Activated T-helper 1 cell treated with anti-CD3 and anti-CD28 coated beads, Interleukin-12 subunit alpha, Interleukin-12 subunit beta, Interleukin-2, Interleukin-4 antibody, amounts not matched to agents 30 ng/mL and 10 ng/mL and 1 ng/mL, durations not matched to agents 14 hours and 24 hours and 36 hours (primary cell): ENCODE measurements at regions of chr9 and their contacts with region 1.

Region 1: GRCh38 chr9:95726756-95727155 is 148.7 kb upstream of the ERCC6L2 start:
- DNase-seq: no peak
- H3K4me3 Mint-ChIP-seq: no peak overlapping the region
- H3K27ac Mint-ChIP-seq: no peak overlapping the region
- H3K4me1 Mint-ChIP-seq: peaks cover 41% of the 10 kb centered on the region
- H3K27me3 Mint-ChIP-seq: peaks cover 14% of the 10 kb centered on the region

Region 2: GRCh38 chr9:95167998-95168397 is 558.8 kb before region 1 on chr9:
- intact Hi-C with region 1: loop called (anchors 1 kb)
- DNase-seq: peak; percentile 47
- H3K4me3 Mint-ChIP-seq: peak overlapping the region; percentile 3
- H3K27ac Mint-ChIP-seq: peak overlapping the region; percentile 61
- H3K4me1 Mint-ChIP-seq: peaks cover 48% of the 10 kb centered on the region
- H3K27me3 Mint-ChIP-seq: no peaks in the 10 kb centered on the region

Region 3: DNA sequence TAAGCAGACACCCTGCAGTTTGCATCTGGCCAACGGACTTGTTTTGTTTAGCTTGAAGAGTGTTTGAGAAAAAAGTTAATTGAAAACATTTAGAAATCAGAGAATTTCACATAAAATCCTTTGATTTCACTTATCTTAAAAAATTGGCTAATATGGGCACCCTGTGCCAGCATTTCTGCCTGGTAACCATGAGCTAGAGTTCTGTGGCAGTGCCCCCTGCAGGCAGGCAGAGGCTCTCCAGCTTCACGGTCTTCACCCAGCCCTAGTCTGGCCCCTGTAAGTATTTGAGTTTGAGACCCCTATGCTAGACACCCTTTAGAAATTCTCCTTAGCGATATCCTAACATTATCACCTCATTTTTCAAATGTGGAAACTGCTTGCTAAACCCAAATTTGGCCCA is 390.5 kb before region 1 on chr9:
- intact Hi-C with region 1: no loop called
- DNase-seq: no peak
- H3K4me3 Mint-ChIP-seq: no peak overlapping the region
- H3K27ac Mint-ChIP-seq: no peak overlapping the region
- H3K4me1 Mint-ChIP-seq: no peaks in the 10 kb centered on the region
- H3K27me3 Mint-ChIP-seq: peaks cover 6% of the 10 kb centered on the region

Region 4: DNA sequence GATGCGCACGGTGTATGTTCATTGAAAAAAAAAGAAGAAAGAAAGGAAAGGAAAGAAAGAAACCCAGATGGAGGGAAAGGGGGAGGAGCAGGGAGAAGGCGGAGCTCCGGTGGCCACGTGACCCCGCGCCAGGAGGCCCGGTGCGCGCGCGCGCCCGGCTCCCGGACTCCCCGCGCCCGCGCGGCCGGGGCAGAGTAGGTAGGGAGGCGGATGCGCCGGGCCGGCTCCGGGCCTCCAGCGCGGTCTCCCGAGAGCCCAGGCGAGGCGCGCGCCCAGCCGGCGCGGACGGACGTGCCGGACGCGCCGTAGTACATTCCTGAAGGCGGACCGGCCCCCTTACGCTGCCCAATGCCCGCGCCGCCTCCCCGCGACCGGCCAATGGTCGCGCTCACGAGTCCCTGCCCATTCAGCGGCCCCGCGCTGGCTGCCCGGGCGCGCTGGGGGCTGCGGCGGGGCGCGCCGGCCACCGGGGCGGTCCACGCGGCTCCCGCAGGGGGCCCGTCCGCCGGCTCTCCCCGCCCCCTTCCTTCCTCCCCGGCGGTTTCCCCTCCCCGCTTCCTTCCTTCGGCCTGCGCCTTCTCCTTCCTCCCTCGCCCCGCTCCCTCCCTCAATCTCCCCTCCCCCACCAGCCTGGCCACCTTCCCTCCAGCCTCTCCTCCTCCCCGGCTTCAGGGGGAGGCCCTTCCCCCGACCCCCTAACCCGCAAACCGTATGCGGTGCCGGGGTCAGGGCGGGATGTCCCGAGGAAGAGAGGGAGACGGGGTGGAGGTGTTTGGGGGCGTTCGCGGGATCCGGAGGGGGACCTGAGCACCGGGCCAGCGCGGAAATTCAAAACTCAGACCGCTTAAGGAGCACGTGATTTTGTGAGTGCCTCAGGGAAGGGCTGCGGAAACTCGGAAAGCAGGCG is 215.8 kb before region 1 on chr9:
- intact Hi-C with region 1: loop called (anchors 1 kb)
- DNase-seq: peak; percentile 82
- H3K4me3 Mint-ChIP-seq: peak overlapping the region; percentile 84
- H3K27ac Mint-ChIP-seq: peak overlapping the region; percentile 88
- H3K4me1 Mint-ChIP-seq: peaks cover 41% of the 10 kb centered on the region
- H3K27me3 Mint-ChIP-seq: peaks cover 61% of the 10 kb centered on the region

Region 5: DNA sequence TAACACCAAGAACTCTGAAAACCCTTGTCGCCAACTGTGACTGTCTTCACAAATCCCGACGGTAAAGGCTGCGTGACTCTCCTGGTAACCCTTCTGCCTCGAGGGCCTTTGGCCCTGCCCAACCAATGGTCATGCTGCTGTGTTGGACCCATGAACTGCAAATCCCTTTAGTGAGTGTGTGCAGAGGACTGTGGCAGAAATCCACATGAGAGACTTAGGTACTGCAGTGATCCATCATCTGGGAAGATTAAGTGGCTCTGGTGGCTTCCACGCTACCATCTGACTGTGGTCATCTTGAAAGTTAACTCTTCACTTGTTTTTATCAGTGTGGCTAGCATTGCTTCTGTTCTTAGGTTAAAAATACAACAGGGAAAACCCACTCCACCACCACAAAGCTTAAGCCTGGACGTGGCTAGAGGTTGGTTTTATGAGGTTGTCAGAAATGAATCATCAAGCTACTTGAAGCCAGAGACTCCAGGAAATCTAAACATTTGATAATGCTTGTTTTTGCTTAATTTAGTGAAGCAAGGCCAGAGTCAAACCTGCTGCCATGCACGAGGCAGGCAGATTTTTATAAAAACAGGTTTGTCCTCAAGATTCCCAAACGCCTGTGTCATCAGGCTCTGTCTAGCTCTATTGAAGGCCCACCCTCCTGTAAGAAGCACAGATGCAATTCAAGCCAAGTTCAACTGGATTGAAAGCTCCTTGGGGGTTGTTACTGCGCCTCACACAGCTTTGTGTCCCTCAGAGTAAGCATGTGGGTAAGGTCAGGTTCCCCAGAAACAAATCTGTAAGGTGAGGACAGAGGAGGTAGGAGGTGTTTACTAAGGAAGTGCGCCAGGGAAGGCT is 96.1 kb after region 1 on chr9:
- intact Hi-C with region 1: loop called (anchors 1 kb)
- DNase-seq: peak; percentile 54
- H3K4me3 Mint-ChIP-seq: no peak overlapping the region
- H3K27ac Mint-ChIP-seq: peak overlapping the region; percentile 77
- H3K4me1 Mint-ChIP-seq: peaks cover 29% of the 10 kb centered on the region
- H3K27me3 Mint-ChIP-seq: peaks cover 31% of the 10 kb centered on the region

Region 6: DNA sequence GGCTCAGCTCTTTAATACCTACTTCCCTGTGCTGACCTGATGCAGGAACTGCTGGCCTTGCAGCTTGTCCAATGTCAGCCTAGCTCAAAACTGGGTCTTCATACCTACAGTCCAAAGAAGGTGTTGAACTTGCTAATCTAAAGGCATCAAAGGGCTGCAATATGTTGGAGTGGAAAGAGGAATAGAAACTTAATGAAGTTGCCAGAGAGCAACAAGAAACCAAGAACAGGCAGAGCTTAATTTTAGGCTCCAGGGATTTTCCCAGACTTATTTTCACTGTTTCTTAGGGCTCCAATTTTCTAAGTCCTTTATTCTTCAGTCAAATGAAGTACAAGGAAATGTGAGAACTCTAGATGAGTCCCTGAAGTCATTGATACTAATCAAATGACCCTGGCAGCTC is 131.1 kb after region 1 on chr9:
- intact Hi-C with region 1: no loop called
- DNase-seq: no peak
- H3K4me3 Mint-ChIP-seq: no peak overlapping the region
- H3K27ac Mint-ChIP-seq: no peak overlapping the region
- H3K4me1 Mint-ChIP-seq: peaks cover 44% of the 10 kb centered on the region
- H3K27me3 Mint-ChIP-seq: no peaks in the 10 kb centered on the region

Region 7: GRCh38 chr9:96061293-96061987 is 334.7 kb after region 1 on chr9:
- intact Hi-C with region 1: loop called (anchors 2 kb)
- DNase-seq: peak; percentile 16
- H3K4me3 Mint-ChIP-seq: no peak overlapping the region
- H3K27ac Mint-ChIP-seq: no peak overlapping the region
- H3K4me1 Mint-ChIP-seq: peaks cover 39% of the 10 kb centered on the region
- H3K27me3 Mint-ChIP-seq: no peaks in the 10 kb centered on the region

Region 8: DNA sequence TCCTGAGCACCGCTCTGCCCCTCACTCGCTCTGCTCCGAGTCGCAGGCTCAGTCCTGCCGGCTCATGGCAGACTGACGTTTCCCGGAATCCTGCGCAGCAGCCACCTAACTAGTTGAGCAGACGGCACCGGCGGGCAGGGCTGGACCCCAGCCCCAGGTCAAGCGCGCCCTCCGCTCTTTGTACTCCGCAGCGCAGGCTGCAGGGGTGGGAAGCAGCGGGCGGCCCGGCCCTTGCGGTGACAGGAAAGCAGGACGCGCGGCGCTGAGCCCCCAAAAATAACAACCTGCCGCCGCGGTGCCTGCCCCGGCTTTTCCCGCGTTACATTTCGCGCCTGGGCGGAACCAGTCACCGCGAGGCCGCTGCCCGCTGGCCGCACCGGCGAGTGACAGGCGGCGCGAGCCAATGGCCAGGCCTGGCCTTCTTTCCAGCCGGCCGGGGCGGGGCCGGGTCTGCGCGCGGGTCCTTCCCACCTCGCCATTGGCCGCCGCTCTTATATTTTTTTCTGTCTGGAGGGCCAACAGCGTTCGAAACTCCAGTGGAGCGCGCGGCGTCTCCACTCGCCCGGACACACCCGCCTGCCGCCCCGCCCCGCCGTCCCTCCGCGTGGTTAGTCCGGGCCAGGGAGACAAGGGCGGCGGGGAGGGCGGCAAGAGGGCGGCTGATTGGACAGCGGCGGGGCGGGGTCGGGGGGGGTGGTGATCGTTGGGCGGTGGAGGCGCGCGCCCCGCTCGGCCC is 691.5 kb after region 1 on chr9 and contains the start of gene ZNF367:
- intact Hi-C with region 1: loop called (anchors 1 kb)
- DNase-seq: peak; percentile 93
- H3K4me3 Mint-ChIP-seq: peak within 1 kb of the TSS; percentile 94
- H3K27ac Mint-ChIP-seq: peak within 1 kb of the TSS; percentile 95
- H3K4me1 Mint-ChIP-seq: peaks cover 43% of the 10 kb centered on the region
- H3K27me3 Mint-ChIP-seq: no peaks in the 10 kb centered on the region
- total RNA-seq, gene ZNF367: 21.8 and 22.0 TPM in 2 replicates